Stomach (tissue), 19 donors: ENCODE measurements at regions of chr1 and their contacts with region 1.

Region 1: DNA sequence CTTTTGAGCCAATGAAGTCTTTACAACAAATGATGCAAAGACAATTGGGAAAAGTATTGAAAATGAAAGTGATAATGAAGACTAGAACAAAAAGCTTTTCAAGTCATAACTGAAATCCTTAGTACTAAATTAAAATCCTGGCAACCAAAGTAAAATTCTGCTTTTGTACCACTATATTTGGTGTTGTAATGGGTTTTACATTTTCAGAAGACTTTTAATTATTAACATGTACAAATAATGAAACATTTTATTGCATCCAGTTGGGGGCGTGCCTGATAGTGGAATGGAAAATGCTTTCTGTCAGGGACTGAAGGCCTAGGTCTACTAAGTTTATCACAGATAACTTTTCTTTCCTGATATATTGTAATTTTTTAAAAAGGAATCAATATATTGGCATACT is 89.4 kb downstream of the SDCCAG8 start:
- DNase-seq: peak in 1 of 2 donors; percentile 53
- H3K4me3 ChIP-seq: no peak overlapping the region
- H3K27ac ChIP-seq: no peak overlapping the region
- H3K4me1 ChIP-seq: peaks cover 0 to 11% (median 5%) of the 10 kb centered on the region in 4 donors
- H3K27me3 ChIP-seq: no peaks in the 10 kb centered on the region
- CTCF ChIP-seq: peak in 1 of 7 experiments; percentile 32
- EP300 ChIP-seq: no peak
- POLR2A ChIP-seq: no peak

Region 2: DNA sequence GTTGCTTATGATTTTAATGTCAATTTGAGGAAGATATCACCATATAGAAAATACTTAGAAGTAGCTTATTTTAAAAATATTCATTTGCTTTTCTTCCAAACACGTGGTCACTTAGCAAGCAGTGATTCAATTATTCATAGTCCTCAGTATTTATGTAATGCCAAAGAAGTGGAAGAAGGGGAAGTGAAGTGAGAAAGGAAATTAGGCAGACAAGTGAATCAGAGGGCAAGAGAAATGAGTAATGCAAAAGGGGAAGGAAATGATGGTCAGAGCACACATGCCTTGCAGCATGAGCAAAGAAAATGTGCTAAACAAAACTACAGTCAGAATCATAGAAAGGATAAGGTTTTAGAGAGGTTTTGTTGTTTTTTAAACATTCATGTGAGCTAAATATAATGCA is 57.6 kb before region 1 on chr1:
- intact Hi-C with region 1: no loop called
- DNase-seq: peak in 1 of 2 donors; percentile 47
- H3K4me3 ChIP-seq: no peak overlapping the region
- H3K27ac ChIP-seq: peak overlapping the region in 4 of 5 donors; percentile 35 to 73 (median 52)
- H3K4me1 ChIP-seq: peaks cover 0 to 34% (median 0%) of the 10 kb centered on the region in 4 donors
- H3K27me3 ChIP-seq: no peaks in the 10 kb centered on the region
- CTCF ChIP-seq: no peak
- EP300 ChIP-seq: no peak
- POLR2A ChIP-seq: no peak

Region 3: GRCh38 chr1:243396876-243397275 is 51.7 kb after region 1 on chr1:
- intact Hi-C with region 1: no loop called
- DNase-seq: peak; percentile 37 to 45
- H3K4me3 ChIP-seq: no peak overlapping the region
- H3K27ac ChIP-seq: peak overlapping the region in 4 of 5 donors; percentile 17 to 55 (median 38)
- H3K4me1 ChIP-seq: peaks cover 0 to 9% (median 0%) of the 10 kb centered on the region in 4 donors
- H3K27me3 ChIP-seq: no peaks in the 10 kb centered on the region
- CTCF ChIP-seq: no peak
- EP300 ChIP-seq: no peak
- POLR2A ChIP-seq: no peak

Region 4: DNA sequence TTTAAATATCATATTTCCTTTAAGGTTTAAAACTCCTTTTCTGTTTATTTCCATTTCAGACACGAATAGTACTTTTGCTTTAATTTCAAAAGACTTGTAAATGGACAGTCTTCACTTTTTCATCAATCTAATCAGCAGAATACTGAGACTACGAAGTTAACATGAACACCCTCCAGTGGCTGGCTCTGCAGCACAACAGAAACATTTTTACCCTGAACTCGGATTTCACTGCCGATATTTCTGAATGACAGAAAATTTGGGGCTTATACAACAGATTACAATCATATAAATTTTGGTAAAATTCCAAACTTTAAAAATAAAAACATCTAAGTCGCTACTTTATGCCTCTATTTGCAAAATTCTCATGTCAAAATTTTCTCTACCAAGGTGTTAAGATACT is 418.6 kb after region 1 on chr1:
- intact Hi-C with region 1: no loop called
- DNase-seq: no peak
- H3K4me3 ChIP-seq: no peak overlapping the region
- H3K27ac ChIP-seq: no peak overlapping the region
- H3K4me1 ChIP-seq: peaks cover 0 to 3% (median 0%) of the 10 kb centered on the region in 4 donors
- H3K27me3 ChIP-seq: no peaks in the 10 kb centered on the region
- CTCF ChIP-seq: no peak
- EP300 ChIP-seq: no peak
- POLR2A ChIP-seq: no peak

Region 5: GRCh38 chr1:244272471-244273261 is 927.5 kb after region 1 on chr1:
- intact Hi-C with region 1: loop called (anchors 5 kb)
- DNase-seq: peak; percentile 72 to 93
- H3K4me3 ChIP-seq: no peak overlapping the region
- H3K27ac ChIP-seq: peak overlapping the region in 3 of 5 donors; percentile 44 to 77 (median 59)
- H3K4me1 ChIP-seq: peaks cover 0 to 24% (median 13%) of the 10 kb centered on the region in 4 donors
- H3K27me3 ChIP-seq: no peaks in the 10 kb centered on the region
- CTCF ChIP-seq: peak in 5 of 7 experiments; percentile 86 to 100 (median 92)
- EP300 ChIP-seq: no peak
- POLR2A ChIP-seq: no peak